ENCODE measurements at regions of chrX and their contacts with region 1.

Region 1: GRCh38 chrX:50691820-50692219 is 122.2 kb downstream of the SHROOM4 start:
- DNase-seq: peak; percentile 39
- H3K4me3 Mint-ChIP-seq: no peak overlapping the region
- H3K27ac Mint-ChIP-seq: no peak overlapping the region
- H3K4me1 Mint-ChIP-seq: peaks cover under 1% of the 10 kb centered on the region
- H3K27me3 Mint-ChIP-seq: no peaks in the 10 kb centered on the region
- CTCF ChIP-seq: peak; percentile 73

Region 2: GRCh38 chrX:50671661-50672060 is 20.2 kb before region 1 on chrX:
- CTCF ChIA-PET with region 1: no interaction called
- intact Hi-C with region 1: no loop called
- DNase-seq: no peak
- H3K4me3 Mint-ChIP-seq: no peak overlapping the region
- H3K27ac Mint-ChIP-seq: no peak overlapping the region
- H3K4me1 Mint-ChIP-seq: no peaks in the 10 kb centered on the region
- H3K27me3 Mint-ChIP-seq: no peaks in the 10 kb centered on the region
- CTCF ChIP-seq: no peak

Region 3: GRCh38 chrX:50905334-50905733 is 213.5 kb after region 1 on chrX:
- CTCF ChIA-PET with region 1: interaction called, 10 read pairs
- intact Hi-C with region 1: loop called (anchors 1 kb)
- DNase-seq: peak; percentile 46
- H3K4me3 Mint-ChIP-seq: no peak overlapping the region
- H3K27ac Mint-ChIP-seq: no peak overlapping the region
- H3K4me1 Mint-ChIP-seq: no peaks in the 10 kb centered on the region
- H3K27me3 Mint-ChIP-seq: no peaks in the 10 kb centered on the region
- CTCF ChIP-seq: peak; percentile 77

Region 4: GRCh38 chrX:50920132-50920531 is 228.3 kb after region 1 on chrX:
- CTCF ChIA-PET with region 1: no interaction called
- intact Hi-C with region 1: loop called (anchors 1 kb)
- DNase-seq: peak; percentile 10
- H3K4me3 Mint-ChIP-seq: no peak overlapping the region
- H3K27ac Mint-ChIP-seq: no peak overlapping the region
- H3K4me1 Mint-ChIP-seq: no peaks in the 10 kb centered on the region
- H3K27me3 Mint-ChIP-seq: peaks cover 12% of the 10 kb centered on the region
- CTCF ChIP-seq: no peak

Region 5: GRCh38 chrX:50988649-50989048 is 296.8 kb after region 1 on chrX:
- CTCF ChIA-PET with region 1: interaction called, 4 read pairs
- intact Hi-C with region 1: loop called (anchors 5 kb)
- DNase-seq: peak; percentile 29
- H3K4me3 Mint-ChIP-seq: no peak overlapping the region
- H3K27ac Mint-ChIP-seq: no peak overlapping the region
- H3K4me1 Mint-ChIP-seq: no peaks in the 10 kb centered on the region
- H3K27me3 Mint-ChIP-seq: peaks cover 26% of the 10 kb centered on the region
- CTCF ChIP-seq: no peak

Measured in Calu3 (cell line).